Activated B cell treated with CpG ODN at 0.5 μM for 24 hours (primary cell): ENCODE measurements at regions of chr4 and their contacts with region 1.

Region 1: DNA sequence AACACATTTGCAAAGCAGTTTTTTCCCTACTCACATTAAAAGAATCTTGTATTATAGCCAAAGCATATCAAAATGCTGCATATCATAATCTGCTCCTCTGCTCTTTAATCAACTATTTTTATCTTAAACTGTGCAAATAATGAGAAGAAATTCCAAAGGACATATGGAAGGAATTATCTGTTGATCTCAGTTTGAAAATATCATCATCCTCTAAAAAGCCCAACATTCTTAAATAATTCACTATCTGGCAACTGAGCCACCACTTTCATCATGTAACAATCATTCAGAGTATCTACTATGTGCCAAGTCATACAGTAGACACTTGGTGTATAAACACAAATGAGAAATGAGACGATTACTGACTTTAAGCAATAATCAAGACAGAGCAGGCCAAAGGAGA is 63.0 kb downstream of the PRSS12 start:
- DNase-seq: no peak
- ATAC-seq: no peak
- H3K4me3 Mint-ChIP-seq: no peak overlapping the region
- H3K27ac Mint-ChIP-seq: no peak overlapping the region
- H3K4me1 Mint-ChIP-seq: no peaks in the 10 kb centered on the region
- H3K27me3 Mint-ChIP-seq: no peaks in the 10 kb centered on the region
- CTCF ChIP-seq: no peak

Region 2: DNA sequence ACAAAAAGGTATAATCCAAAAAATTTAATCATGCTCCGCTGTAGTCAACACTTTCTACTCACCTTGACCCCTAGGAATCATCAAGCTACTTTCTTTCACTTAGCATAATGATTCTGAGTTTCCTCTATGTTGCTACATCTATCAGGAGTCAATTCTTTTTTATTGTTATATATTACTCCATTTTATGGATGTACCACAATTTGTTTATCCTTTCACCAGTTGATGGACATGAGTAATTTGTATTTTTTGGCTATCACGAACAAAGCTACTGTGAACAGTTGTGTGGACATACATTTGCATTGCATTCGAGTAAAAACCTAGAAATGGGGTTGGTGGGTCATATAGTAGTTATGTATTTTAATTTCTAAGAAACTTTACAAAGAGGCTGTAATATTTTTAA is 39.9 kb before region 1 on chr4:
- CTCF ChIA-PET with region 1: no interaction called
- POLR2A ChIA-PET with region 1: no interaction called
- intact Hi-C with region 1: loop called (anchors 1 kb)
- DNase-seq: no peak
- ATAC-seq: no peak
- H3K4me3 Mint-ChIP-seq: no peak overlapping the region
- H3K27ac Mint-ChIP-seq: no peak overlapping the region
- H3K4me1 Mint-ChIP-seq: no peaks in the 10 kb centered on the region
- H3K27me3 Mint-ChIP-seq: no peaks in the 10 kb centered on the region
- CTCF ChIP-seq: no peak